ENCODE measurements at regions of chr1 and their contacts with region 1.

Region 1: GRCh38 chr1:213176341-213176740 is 125.3 kb downstream of the RPS6KC1 start:
- DNase-seq: no peak
- H3K4me3 ChIP-seq: no peak overlapping the region
- H3K27ac ChIP-seq: no peak overlapping the region
- H3K4me1 ChIP-seq: no peaks in the 10 kb centered on the region
- CTCF ChIP-seq: no peak

Region 2: DNA sequence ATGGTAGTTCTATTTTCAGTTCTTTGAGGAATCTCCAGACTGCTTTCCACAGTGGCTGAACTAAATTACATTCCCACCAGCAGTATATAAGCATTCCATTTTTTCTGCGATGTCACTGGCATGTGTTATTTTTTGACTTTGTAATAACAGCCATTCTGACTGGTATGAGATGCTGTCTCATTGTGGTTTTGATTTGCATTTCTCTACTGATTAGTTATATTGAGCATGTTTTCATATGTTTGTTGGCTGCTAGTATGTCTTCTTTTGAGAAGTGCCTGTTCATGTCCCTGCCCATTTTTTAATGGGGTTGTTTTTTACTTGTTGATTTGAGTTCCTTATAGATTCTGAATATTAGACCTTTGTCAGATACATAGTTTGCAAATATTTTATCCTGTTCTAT is 37.4 kb before region 1 on chr1:
- CTCF ChIA-PET with region 1: no interaction called
- POLR2A ChIA-PET with region 1: no interaction called
- intact Hi-C with region 1: loop called (anchors 1 kb)
- DNase-seq: no peak
- H3K4me3 ChIP-seq: no peak overlapping the region
- H3K27ac ChIP-seq: no peak overlapping the region
- H3K4me1 ChIP-seq: no peaks in the 10 kb centered on the region
- CTCF ChIP-seq: no peak

Region 3: DNA sequence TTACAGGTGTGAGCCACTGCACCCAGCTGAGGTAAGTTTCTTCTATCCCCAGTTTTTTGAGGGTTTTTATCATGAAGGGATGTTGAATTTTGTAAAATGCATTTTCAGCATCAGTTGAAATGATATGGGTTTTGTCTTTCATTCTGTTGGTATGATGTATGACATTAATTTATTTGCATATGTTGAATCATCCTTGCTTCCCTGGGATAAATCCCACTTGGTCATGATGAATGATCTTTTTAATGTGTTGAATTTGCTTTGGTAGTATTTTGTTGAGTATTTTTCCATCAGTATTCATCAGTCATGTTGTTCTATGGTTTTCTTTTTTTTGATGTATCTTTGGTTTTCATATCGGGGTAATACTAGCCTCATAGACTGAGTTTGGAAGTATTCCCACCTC is 15.7 kb after region 1 on chr1:
- CTCF ChIA-PET with region 1: no interaction called
- POLR2A ChIA-PET with region 1: no interaction called
- intact Hi-C with region 1: no loop called
- DNase-seq: no peak
- H3K4me3 ChIP-seq: no peak overlapping the region
- H3K27ac ChIP-seq: no peak overlapping the region
- H3K4me1 ChIP-seq: no peaks in the 10 kb centered on the region
- CTCF ChIP-seq: no peak

Measured in OCI-LY7 (cell line).